Naive thymus-derived CD4-positive, alpha-beta T cell (primary cell): ENCODE measurements at regions of chr17 and their contacts with region 1.

Region 1: GRCh38 chr17:43694077-43694870 is 32.6 kb upstream of the MEOX1 start:
- DNase-seq: peak; percentile 43 to 75 (median 67)
- ATAC-seq: peak; percentile 97
- H3K4me3 ChIP-seq: no peak overlapping the region
- H3K4me3 Mint-ChIP-seq: no peak overlapping the region
- H3K27ac ChIP-seq: no peak overlapping the region
- H3K27ac Mint-ChIP-seq: no peak overlapping the region
- H3K4me1 ChIP-seq: no peaks in the 10 kb centered on the region
- H3K4me1 Mint-ChIP-seq: no peaks in the 10 kb centered on the region
- H3K27me3 ChIP-seq: no peaks in the 10 kb centered on the region
- H3K27me3 Mint-ChIP-seq: peaks cover 5 to 15% (median 6%) of the 10 kb centered on the region in 5 donors

Region 2: GRCh38 chr17:43766413-43767052 is 72.3 kb after region 1 on chr17:
- CTCF ChIA-PET with region 1: interaction called, 160 read pairs
- POLR2A ChIA-PET with region 1: interaction called, 3 read pairs
- intact Hi-C with region 1: loop called in 1 of 2 experiments (anchors 1 kb)
- DNase-seq: peak in 5 of 9 donors; percentile 22 to 36 (median 32)
- ATAC-seq: no peak
- H3K4me3 ChIP-seq: no peak overlapping the region
- H3K4me3 Mint-ChIP-seq: no peak overlapping the region
- H3K27ac ChIP-seq: no peak overlapping the region
- H3K27ac Mint-ChIP-seq: no peak overlapping the region
- H3K4me1 ChIP-seq: no peaks in the 10 kb centered on the region
- H3K4me1 Mint-ChIP-seq: peaks cover 0 to 2% (median 0%) of the 10 kb centered on the region in 7 donors
- H3K27me3 ChIP-seq: no peaks in the 10 kb centered on the region
- H3K27me3 Mint-ChIP-seq: no peaks in the 10 kb centered on the region

Region 3: DNA sequence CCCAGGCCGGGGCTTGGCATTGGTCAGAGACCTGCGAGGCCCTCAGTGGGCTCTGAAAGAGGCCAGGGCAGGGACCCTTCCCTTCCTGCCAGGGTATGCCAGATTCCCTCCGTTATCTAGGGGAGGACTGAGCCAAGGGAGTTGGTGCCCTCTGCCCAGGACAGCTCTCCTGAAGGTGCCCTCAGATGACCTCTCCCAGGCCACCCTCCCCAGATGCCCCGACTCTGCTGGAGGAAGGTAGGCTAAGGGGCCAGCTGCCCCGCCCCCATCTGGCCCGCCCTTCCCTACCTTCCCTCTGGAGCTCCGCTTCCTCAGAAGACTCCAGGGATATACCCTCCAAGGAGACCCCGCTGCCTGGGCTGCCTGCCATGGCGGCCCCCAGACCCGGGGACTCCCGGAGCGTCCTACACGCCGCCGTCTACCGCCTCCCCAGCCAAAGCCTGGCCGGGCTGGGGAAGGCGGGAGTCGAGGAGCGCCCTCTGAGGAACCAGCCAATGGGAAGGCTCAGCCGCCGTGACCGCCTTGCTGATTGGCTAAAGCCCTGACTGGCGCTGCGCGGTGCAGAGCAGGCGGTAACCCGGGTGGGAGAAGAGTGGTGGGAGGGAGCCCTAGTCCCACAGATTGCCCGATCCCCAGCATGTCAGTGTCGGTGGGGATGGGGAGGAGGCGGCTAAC is 206.0 kb after region 1 on chr17:
- CTCF ChIA-PET with region 1: no interaction called
- POLR2A ChIA-PET with region 1: no interaction called
- intact Hi-C with region 1: no loop called
- DNase-seq: peak; percentile 63 to 83 (median 78)
- ATAC-seq: peak; percentile 99
- H3K4me3 ChIP-seq: peak overlapping the region; percentile 43
- H3K4me3 Mint-ChIP-seq: peak overlapping the region; percentile 80 to 89 (median 86)
- H3K27ac ChIP-seq: no peak overlapping the region
- H3K27ac Mint-ChIP-seq: peak overlapping the region in 3 of 9 donors; percentile 51 to 75 (median 54)
- H3K4me1 ChIP-seq: peaks cover 0 to 7% of the 10 kb centered on the region in 2 donors
- H3K4me1 Mint-ChIP-seq: peaks cover 6 to 22% (median 12%) of the 10 kb centered on the region in 7 donors
- H3K27me3 ChIP-seq: no peaks in the 10 kb centered on the region
- H3K27me3 Mint-ChIP-seq: peaks cover 0 to 43% (median 0%) of the 10 kb centered on the region in 5 donors

Region 4: DNA sequence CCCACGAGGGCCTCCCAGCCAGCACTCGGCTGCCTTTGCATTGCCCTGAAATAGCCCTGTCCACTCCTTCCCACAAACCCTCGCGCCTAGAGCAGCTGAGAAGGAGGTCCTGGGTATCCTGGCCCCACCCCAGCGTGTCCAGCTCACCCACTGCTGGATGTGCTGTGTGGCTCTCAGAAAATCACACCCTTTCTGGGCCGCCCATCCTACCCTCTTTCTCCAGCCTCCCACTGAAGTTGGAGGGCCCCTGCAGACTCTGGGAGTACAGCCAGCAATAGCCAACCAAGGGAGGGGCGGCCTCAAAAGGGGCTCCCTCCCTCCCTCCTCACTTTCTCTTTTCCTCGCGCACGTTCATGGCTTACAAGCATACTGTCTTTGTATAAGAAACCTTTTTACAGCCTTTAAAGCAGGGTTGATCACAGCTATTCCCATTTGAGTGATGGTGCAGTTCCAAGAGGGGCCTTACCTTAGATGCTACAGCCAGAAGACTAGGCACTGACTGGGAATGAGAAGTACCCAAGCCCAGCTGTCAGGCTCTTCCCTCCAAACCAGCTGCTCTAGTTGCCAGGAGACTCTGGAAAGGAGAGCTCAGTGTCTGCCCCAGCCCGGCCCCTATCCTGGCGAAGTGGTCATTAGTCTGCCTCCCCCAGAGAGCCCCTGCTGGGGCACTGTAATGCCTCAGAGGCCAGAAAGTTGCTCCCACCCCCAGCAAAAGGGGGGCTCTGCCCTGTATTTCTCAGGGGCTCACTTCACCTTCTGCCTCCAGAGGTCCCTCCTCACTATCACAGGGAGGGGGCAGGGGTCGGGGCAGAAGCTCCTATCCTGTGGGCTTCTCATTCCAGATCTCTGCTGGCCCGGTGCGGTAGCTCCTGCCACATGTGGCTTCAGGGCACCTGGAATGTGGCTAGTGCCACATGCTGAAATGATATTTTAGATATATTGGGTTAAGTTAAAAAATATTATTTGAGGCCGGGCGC is 1319.0 kb after region 1 on chr17:
- CTCF ChIA-PET with region 1: no interaction called
- POLR2A ChIA-PET with region 1: no interaction called
- intact Hi-C with region 1: no loop called
- DNase-seq: no peak
- ATAC-seq: no peak
- H3K4me3 ChIP-seq: no peak overlapping the region
- H3K4me3 Mint-ChIP-seq: no peak overlapping the region
- H3K27ac ChIP-seq: no peak overlapping the region
- H3K27ac Mint-ChIP-seq: no peak overlapping the region
- H3K4me1 ChIP-seq: no peaks in the 10 kb centered on the region
- H3K4me1 Mint-ChIP-seq: peaks cover 0 to under 1% (median 0%) of the 10 kb centered on the region in 7 donors
- H3K27me3 ChIP-seq: no peaks in the 10 kb centered on the region
- H3K27me3 Mint-ChIP-seq: peaks cover 9 to 24% (median 17%) of the 10 kb centered on the region in 5 donors